ENCODE measurements at regions of chr9 and their contacts with region 1.

Region 1: GRCh38 chr9:89522261-89522958 is 24.5 kb upstream of the SEMA4D start:
- DNase-seq: peak; percentile 49
- ATAC-seq: peak; percentile 93
- H3K4me3 Mint-ChIP-seq: peak overlapping the region; percentile 78
- H3K27ac Mint-ChIP-seq: peak overlapping the region; percentile 96
- H3K4me1 Mint-ChIP-seq: peaks cover 85% of the 10 kb centered on the region
- H3K27me3 Mint-ChIP-seq: no peaks in the 10 kb centered on the region
- CTCF ChIP-seq: no peak

Region 2: GRCh38 chr9:89318123-89319014 is 204.0 kb before region 1 on chr9 and contains the start of gene SECISBP2:
- CTCF ChIA-PET with region 1: no interaction called
- POLR2A ChIA-PET with region 1: interaction called, 3 read pairs
- intact Hi-C with region 1: loop called (anchors 1 kb)
- DNase-seq: peak; percentile 98
- ATAC-seq: peak; percentile 92
- H3K4me3 Mint-ChIP-seq: peak within 1 kb of the TSS; percentile 91
- H3K27ac Mint-ChIP-seq: peak within 1 kb of the TSS; percentile 98
- H3K4me1 Mint-ChIP-seq: peaks cover 62% of the 10 kb centered on the region
- H3K27me3 Mint-ChIP-seq: no peaks in the 10 kb centered on the region
- CTCF ChIP-seq: no peak
- total RNA-seq, gene SECISBP2: 81.5 and 97.1 TPM in 2 replicates

Region 3: DNA sequence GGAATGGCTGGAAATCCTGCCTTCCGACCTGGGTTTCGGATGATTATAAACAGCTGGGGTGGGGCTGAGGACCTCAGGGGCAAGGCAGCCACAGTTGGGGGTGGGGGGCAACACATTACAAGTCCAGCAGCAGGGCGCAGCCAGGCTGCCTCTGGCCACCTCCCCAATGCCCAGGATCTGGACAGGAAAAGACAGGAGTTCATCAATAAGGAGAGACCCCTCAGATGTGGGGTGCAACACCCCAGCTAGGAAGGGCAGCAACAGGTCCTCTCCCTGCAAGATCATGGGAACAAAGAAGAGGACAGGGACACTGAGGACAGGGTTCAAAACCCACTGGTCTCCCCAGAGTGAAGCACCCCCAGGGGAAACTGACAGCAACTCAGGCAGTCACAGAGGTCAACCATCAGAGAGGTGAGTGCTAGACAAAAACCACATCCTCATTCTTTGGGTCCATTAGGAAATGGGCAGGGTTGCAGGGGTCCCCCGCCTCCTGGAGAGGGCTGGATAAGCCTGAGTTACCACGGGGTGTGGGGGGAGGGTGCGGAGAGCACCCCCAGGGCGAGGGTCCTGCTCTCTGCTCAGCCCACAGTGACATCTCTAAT is 58.0 kb before region 1 on chr9:
- CTCF ChIA-PET with region 1: no interaction called
- POLR2A ChIA-PET with region 1: interaction called, 4 read pairs
- intact Hi-C with region 1: loop called (anchors 1 kb)
- DNase-seq: peak; percentile 23
- ATAC-seq: peak; percentile 49
- H3K4me3 Mint-ChIP-seq: peak overlapping the region; percentile 72
- H3K27ac Mint-ChIP-seq: peak overlapping the region; percentile 80
- H3K4me1 Mint-ChIP-seq: peaks cover 90% of the 10 kb centered on the region
- H3K27me3 Mint-ChIP-seq: no peaks in the 10 kb centered on the region
- CTCF ChIP-seq: no peak

Region 4: GRCh38 chr9:89483592-89484522 is 38.6 kb before region 1 on chr9:
- CTCF ChIA-PET with region 1: no interaction called
- POLR2A ChIA-PET with region 1: interaction called, 3 read pairs
- intact Hi-C with region 1: loop called (anchors 1 kb)
- DNase-seq: peak; percentile 52
- ATAC-seq: peak; percentile 82
- H3K4me3 Mint-ChIP-seq: peak overlapping the region; percentile 80
- H3K27ac Mint-ChIP-seq: peak overlapping the region; percentile 79
- H3K4me1 Mint-ChIP-seq: peaks cover 79% of the 10 kb centered on the region
- H3K27me3 Mint-ChIP-seq: no peaks in the 10 kb centered on the region
- CTCF ChIP-seq: no peak

Region 5: GRCh38 chr9:89497978-89498851 is 24.2 kb before region 1 on chr9 and contains the start of gene SEMA4D:
- CTCF ChIA-PET with region 1: no interaction called
- POLR2A ChIA-PET with region 1: interaction called, 4 read pairs
- intact Hi-C with region 1: loop called (anchors 1 kb)
- DNase-seq: peak; percentile 29
- ATAC-seq: peak; percentile 49
- H3K4me3 Mint-ChIP-seq: peak within 1 kb of the TSS; percentile 92
- H3K27ac Mint-ChIP-seq: peak within 1 kb of the TSS; percentile 91
- H3K4me1 Mint-ChIP-seq: peaks cover 79% of the 10 kb centered on the region
- H3K27me3 Mint-ChIP-seq: no peaks in the 10 kb centered on the region
- CTCF ChIP-seq: no peak
- total RNA-seq, gene SEMA4D: 68.0 and 79.7 TPM in 2 replicates

Region 6: DNA sequence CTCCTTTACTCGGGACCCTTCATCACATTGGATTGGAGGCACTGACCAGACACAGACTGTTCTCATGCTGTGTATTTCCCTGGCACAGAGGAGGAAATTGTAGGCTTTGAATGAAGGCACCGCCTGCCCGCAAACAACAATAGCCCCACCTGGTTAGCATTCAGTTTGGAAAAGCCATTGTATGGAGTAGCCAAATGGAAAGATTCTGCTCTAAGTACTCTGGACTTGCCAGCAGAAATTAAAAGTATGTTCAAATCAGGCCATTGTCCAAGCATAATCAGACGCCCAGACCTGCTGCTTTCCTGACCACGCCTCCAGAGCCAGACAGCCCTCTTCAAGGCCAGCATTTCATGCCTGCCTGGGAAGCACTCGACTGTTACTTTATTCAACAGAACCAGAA is 16.5 kb before region 1 on chr9:
- CTCF ChIA-PET with region 1: no interaction called
- POLR2A ChIA-PET with region 1: interaction called, 17 read pairs
- intact Hi-C with region 1: loop called (anchors 1 kb)
- DNase-seq: no peak
- ATAC-seq: no peak
- H3K4me3 Mint-ChIP-seq: no peak overlapping the region
- H3K27ac Mint-ChIP-seq: peak overlapping the region; percentile 64
- H3K4me1 Mint-ChIP-seq: peaks cover 77% of the 10 kb centered on the region
- H3K27me3 Mint-ChIP-seq: no peaks in the 10 kb centered on the region
- CTCF ChIP-seq: no peak

Region 7: DNA sequence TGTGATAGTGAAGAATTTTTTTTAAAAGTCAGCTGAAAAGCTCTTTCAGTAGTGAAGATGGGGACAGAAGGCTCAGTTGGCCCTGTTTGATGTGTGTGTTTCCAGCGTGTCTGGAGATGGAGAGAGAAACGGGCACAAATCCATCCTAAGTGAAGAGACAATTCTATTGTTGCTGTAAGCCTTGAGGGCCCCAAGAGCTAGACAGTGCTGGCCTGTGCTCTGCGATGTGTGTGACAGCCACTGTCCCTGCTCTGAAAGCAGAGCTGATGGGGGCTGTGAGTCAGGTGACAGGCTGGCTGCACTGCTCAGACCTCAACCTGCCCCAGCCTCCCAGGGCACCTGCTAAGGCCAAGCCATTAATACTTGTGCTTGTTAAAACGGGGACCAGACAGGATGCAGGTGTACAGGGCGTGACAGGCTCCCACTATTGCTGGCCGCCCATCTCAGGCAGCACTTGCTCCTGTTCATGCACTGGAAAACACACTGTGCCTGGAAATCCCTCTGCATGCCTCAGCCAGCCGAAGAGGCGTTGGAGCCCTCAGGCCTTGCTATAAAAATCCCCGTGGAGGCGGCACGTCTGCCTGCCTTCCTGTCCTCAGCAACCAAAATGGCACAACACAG is 20.1 kb after region 1 on chr9:
- CTCF ChIA-PET with region 1: interaction called, 21 read pairs
- POLR2A ChIA-PET with region 1: interaction called, 11 read pairs
- intact Hi-C with region 1: loop called (anchors 1 kb)
- DNase-seq: no peak
- ATAC-seq: peak; percentile 67
- H3K4me3 Mint-ChIP-seq: peak overlapping the region; percentile 52
- H3K27ac Mint-ChIP-seq: peak overlapping the region; percentile 46
- H3K4me1 Mint-ChIP-seq: peaks cover 32% of the 10 kb centered on the region
- H3K27me3 Mint-ChIP-seq: no peaks in the 10 kb centered on the region
- CTCF ChIP-seq: no peak

Region 8: DNA sequence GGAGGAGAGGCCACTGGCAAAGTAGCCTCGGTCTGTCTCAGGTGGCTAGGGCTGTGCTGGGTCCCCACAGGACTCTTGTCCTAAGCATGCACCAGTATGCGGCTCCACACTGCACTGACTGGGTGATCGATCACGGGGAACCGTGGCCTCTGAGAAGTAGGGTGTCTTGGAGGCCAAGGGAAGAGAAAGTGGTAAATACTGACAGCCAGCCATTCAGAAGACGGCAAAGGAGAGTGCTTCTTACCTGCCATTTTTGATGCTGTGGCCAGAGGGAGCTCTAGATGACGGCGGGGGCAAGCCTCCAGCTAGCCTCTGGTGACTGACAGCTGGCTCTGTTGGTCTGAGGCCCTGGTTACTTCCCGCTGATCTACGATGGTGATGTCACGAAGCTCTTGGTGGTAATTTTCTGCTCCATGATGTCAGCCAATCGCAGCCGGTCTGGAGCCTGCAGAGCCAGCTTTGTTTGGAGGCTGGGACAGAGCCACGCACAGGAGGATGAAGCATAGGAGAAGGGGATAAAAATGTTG is 42.0 kb after region 1 on chr9:
- CTCF ChIA-PET with region 1: no interaction called
- POLR2A ChIA-PET with region 1: no interaction called
- intact Hi-C with region 1: no loop called
- DNase-seq: no peak
- ATAC-seq: peak; percentile 54
- H3K4me3 Mint-ChIP-seq: no peak overlapping the region
- H3K27ac Mint-ChIP-seq: no peak overlapping the region
- H3K4me1 Mint-ChIP-seq: no peaks in the 10 kb centered on the region
- H3K27me3 Mint-ChIP-seq: no peaks in the 10 kb centered on the region
- CTCF ChIP-seq: no peak